PC-3 (cell line): ENCODE measurements at regions of chr18 and their contacts with region 1.

Region 1: DNA sequence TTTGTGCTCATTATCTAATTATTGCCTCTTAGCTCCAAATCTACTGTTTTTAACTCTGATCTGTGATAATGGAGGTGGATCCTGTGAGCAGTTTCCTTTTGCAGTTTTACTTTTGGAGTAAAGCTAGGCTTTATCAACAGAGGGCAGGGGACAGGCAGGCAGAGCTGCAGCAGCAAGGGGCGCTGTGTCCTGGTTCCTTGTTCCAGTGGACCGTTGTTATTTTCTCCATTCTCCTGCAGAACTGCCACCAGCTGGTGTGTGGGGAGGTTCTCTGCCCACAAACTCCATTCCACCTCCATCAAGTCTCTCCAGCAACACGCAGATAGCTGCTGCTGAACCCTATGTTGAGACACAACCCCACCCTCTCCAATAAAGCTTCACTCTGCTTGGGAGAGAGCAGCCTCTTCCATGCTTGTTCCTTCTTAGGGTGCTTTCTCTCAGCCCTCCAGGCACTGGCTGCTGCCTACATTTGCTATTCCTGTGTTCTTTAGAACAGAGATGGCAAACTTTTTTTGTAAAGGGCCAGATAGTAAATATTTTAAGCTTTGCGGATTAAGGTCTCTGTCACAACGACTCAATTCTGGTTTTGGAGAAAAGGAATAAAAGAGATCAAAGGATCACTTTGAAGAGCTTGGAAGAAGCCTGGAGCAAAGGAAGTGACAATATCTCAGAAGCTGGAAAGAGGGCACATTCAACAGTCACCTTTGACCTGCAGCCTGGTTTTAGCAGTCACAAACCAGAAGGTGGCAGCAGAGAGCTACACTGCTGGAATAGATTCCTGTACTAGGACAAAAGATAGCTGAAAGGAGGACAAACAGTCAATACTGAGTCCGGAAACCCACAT is 208.8 kb downstream of the CCDC178 start:
- DNase-seq: peak; percentile 55
- ATAC-seq: peak; percentile 62
- H3K4me3 ChIP-seq: no peak overlapping the region
- H3K27ac ChIP-seq: no peak overlapping the region
- H3K4me1 ChIP-seq: no peaks in the 10 kb centered on the region
- H3K27me3 ChIP-seq: no peaks in the 10 kb centered on the region
- CTCF ChIP-seq: peak; percentile 68

Region 2: DNA sequence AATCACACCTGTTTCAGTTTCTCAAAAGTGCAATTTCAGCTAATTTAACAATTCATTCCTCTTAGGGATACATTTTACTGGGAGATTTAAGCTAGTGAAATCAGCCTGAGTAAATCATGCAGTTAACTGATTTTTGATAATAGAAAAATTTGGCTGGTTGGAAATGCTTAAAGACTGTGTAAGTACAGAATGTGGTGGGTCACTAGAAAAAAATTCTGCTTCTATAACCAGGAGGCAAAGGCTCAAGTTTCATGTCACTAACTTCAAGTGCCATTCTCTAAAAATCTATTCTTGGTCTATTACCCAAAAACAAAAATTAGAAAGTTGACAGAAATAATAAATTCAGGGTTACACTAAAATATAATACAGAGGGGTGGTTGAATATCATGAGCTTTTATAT is 62.5 kb before region 1 on chr18:
- CTCF ChIA-PET with region 1: no interaction called
- POLR2A ChIA-PET with region 1: no interaction called
- intact Hi-C with region 1: no loop called
- DNase-seq: no peak
- ATAC-seq: no peak
- H3K4me3 ChIP-seq: no peak overlapping the region
- H3K27ac ChIP-seq: no peak overlapping the region
- H3K4me1 ChIP-seq: no peaks in the 10 kb centered on the region
- H3K27me3 ChIP-seq: no peaks in the 10 kb centered on the region
- CTCF ChIP-seq: no peak

Region 3: GRCh38 chr18:33404244-33404873 is 172.7 kb after region 1 on chr18:
- CTCF ChIA-PET with region 1: no interaction called
- POLR2A ChIA-PET with region 1: no interaction called
- intact Hi-C with region 1: loop called (anchors 10 kb)
- DNase-seq: no peak
- ATAC-seq: no peak
- H3K4me3 ChIP-seq: no peak overlapping the region
- H3K27ac ChIP-seq: no peak overlapping the region
- H3K4me1 ChIP-seq: no peaks in the 10 kb centered on the region
- H3K27me3 ChIP-seq: no peaks in the 10 kb centered on the region
- CTCF ChIP-seq: peak; percentile 44; the same call in 1 of the 2 replicates

Region 4: GRCh38 chr18:33761363-33761762 is 529.7 kb after region 1 on chr18:
- CTCF ChIA-PET with region 1: interaction called, 16 read pairs
- POLR2A ChIA-PET with region 1: no interaction called
- intact Hi-C with region 1: loop called (anchors 2 kb)
- DNase-seq: peak; percentile 4
- ATAC-seq: peak; percentile 75
- H3K4me3 ChIP-seq: no peak overlapping the region
- H3K27ac ChIP-seq: no peak overlapping the region
- H3K4me1 ChIP-seq: 0 out of 2 replicates have a peak, but pooled peaks cover 4% of the 10 kb centered on the region
- H3K27me3 ChIP-seq: no peaks in the 10 kb centered on the region
- CTCF ChIP-seq: peak; percentile 40